Vagina (tissue), 2 donors: ENCODE measurements at regions of chr1 and their contacts with region 1.

Region 1: DNA sequence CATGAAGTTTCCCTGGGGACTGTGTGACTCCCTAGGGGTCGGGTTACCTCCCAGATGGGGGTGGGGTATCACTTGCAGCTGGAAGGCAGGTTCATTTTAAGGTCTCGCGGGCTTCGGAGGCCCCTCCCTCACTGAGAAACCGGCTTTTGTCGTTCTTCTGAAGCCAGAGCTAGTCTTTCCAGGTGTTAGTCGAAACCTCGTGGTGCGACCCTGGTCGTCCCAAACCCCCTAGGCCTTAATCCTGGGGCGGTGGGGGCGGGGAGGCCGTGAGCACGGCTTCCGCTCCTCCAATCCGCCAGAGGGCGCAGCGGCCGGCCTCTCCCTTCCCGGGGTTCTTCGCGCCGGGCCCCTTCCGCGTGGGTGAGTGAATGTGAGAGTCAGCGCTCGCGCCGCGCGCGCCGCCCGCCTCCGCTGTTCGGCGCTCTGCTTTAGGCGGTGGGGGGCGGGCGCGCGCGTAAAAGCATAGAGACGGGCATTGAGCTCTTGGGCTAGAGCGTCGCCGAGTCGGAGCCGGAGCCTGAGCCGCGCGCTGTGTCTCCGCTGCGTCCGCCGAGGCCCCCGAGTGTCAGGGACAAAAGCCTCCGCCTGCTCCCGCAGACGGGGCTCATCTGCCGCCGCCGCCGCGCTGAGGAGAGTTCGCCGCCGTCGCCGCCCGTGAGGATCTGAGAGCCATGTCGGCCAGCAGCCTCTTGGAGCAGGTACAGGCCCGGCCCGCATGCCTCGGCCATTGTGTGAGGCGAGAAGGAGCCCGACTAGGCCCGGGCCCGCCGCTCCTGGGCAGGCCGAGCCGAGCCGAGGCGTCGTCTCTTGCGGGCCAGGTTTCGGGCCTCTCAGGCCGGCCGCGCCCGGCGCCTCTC is at the start of gene YTHDF2:
- DNase-seq: peak in 1 of 2 donors; percentile 92
- H3K4me3 ChIP-seq: peak within 1 kb of the TSS; percentile 85 to 88
- H3K27ac ChIP-seq: peak within 1 kb of the TSS; percentile 85
- H3K4me1 ChIP-seq: peaks cover 47% of the 10 kb centered on the region
- H3K27me3 ChIP-seq: no peaks in the 10 kb centered on the region
- CTCF ChIP-seq: peak; percentile 75 to 96 (median 85)
- POLR2A ChIP-seq: peak in 1 of 2 donors; percentile 68
- total RNA-seq, gene YTHDF2: 61.9 TPM

Region 2: DNA sequence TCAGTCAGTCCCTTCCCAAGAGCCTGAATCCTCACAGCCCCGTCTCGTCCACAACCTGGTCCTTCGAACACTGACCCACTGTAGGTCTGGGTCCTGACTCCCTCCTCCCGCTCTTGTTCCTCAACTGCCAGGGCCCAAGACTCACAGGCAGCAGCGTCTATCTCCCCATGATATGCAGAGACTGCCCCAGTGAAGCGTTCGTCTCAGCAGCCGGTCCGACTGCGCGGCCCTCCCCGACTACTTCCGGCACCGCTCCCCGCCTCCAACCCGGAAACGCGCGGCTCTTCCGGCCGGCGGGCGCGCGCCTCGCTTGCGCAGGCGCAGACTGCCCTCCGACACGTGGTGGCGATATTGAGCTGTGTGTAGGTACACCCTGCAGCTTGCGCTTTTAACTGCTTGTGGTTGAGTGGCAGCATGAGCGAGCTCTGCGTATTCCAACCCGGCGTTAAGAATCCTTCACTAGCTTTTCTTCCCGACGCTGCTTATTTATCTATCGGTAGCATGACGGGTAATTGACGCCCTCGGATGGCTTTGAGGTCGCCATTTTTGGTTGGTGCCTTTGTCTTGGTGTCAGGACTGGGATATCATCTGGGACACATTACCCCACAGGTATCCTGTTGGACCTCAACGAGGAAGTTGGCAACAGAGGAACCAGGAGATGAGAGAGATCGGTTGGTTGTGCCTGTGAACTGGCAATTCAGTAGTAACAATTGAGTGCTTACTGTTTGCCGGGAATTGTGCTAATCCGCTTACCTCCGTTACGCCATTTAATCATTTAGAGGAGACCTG is 93.6 kb before region 1 on chr1 and contains the start of gene TAF12:
- intact Hi-C with region 1: loop called (anchors 10 kb)
- DNase-seq: peak; percentile 97
- H3K4me3 ChIP-seq: peak within 1 kb of the TSS; percentile 92
- H3K27ac ChIP-seq: peak within 1 kb of the TSS; percentile 90
- H3K4me1 ChIP-seq: peaks cover 53% of the 10 kb centered on the region
- H3K27me3 ChIP-seq: no peaks in the 10 kb centered on the region
- CTCF ChIP-seq: peak in 2 of 3 experiments; percentile 39 to 44
- POLR2A ChIP-seq: peak in 1 of 2 donors; percentile 84
- total RNA-seq, gene TAF12: 14.2 TPM